ENCODE measurements at regions of chr6 and their contacts with region 1.

Region 1: GRCh38 chr6:119349323-119350042 is at the start of gene MAN1A1:
- DNase-seq: peak; percentile 92
- H3K4me3 Mint-ChIP-seq: peak within 1 kb of the TSS; percentile 79
- H3K27ac Mint-ChIP-seq: peak within 1 kb of the TSS; percentile 94
- H3K4me1 Mint-ChIP-seq: peaks cover 69% of the 10 kb centered on the region
- H3K27me3 Mint-ChIP-seq: no peaks in the 10 kb centered on the region
- total RNA-seq, gene MAN1A1: 50.1 and 52.4 TPM in 2 replicates

Region 2: GRCh38 chr6:118843685-118844390 is 505.6 kb before region 1 on chr6:
- intact Hi-C with region 1: loop called (anchors 1 kb)
- DNase-seq: peak; percentile 11
- H3K4me3 Mint-ChIP-seq: peak overlapping the region; percentile 34
- H3K27ac Mint-ChIP-seq: peak overlapping the region; percentile 19
- H3K4me1 Mint-ChIP-seq: peaks cover 27% of the 10 kb centered on the region
- H3K27me3 Mint-ChIP-seq: no peaks in the 10 kb centered on the region

Region 3: GRCh38 chr6:119129148-119129967 is 220.1 kb before region 1 on chr6:
- intact Hi-C with region 1: loop called (anchors 1 kb)
- DNase-seq: no peak
- H3K4me3 Mint-ChIP-seq: no peak overlapping the region
- H3K27ac Mint-ChIP-seq: peak overlapping the region; percentile 82
- H3K4me1 Mint-ChIP-seq: peaks cover 12% of the 10 kb centered on the region
- H3K27me3 Mint-ChIP-seq: peaks cover 9% of the 10 kb centered on the region

Region 4: DNA sequence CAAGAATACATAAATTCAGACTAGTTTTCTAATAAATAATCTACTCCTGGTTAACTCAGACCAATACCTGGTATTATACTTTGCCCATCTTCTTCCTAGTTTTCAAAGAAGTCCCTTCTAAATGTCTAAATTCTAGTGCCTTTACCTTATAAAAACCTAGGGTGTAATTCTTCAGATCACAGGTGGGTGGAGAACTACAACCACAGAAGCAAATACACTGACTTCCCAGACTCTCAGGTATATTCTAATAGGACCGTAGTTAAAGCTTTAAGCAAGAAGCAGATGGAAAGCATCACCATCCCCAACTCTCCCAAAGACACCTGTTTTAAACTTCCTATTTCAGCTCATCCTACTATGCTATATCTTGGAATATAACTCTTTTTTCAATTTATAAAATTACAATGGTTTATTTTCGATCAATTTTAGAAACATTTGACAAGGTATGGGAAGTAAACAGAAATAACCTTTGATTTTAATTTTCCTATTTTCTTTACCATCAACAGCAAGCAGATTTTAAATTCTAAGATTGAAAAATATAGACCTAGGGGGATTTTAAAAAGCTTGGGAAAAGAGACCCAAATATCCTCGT is 15.7 kb before region 1 on chr6:
- intact Hi-C with region 1: loop called (anchors 1 kb)
- DNase-seq: no peak
- H3K4me3 Mint-ChIP-seq: no peak overlapping the region
- H3K27ac Mint-ChIP-seq: no peak overlapping the region
- H3K4me1 Mint-ChIP-seq: peaks cover 69% of the 10 kb centered on the region
- H3K27me3 Mint-ChIP-seq: no peaks in the 10 kb centered on the region

Region 5: GRCh38 chr6:119620846-119621555 is 271.5 kb after region 1 on chr6:
- intact Hi-C with region 1: loop called (anchors 5 kb)
- DNase-seq: no peak
- H3K4me3 Mint-ChIP-seq: no peak overlapping the region
- H3K27ac Mint-ChIP-seq: no peak overlapping the region
- H3K4me1 Mint-ChIP-seq: no peaks in the 10 kb centered on the region
- H3K27me3 Mint-ChIP-seq: peaks cover 2% of the 10 kb centered on the region

Region 6: DNA sequence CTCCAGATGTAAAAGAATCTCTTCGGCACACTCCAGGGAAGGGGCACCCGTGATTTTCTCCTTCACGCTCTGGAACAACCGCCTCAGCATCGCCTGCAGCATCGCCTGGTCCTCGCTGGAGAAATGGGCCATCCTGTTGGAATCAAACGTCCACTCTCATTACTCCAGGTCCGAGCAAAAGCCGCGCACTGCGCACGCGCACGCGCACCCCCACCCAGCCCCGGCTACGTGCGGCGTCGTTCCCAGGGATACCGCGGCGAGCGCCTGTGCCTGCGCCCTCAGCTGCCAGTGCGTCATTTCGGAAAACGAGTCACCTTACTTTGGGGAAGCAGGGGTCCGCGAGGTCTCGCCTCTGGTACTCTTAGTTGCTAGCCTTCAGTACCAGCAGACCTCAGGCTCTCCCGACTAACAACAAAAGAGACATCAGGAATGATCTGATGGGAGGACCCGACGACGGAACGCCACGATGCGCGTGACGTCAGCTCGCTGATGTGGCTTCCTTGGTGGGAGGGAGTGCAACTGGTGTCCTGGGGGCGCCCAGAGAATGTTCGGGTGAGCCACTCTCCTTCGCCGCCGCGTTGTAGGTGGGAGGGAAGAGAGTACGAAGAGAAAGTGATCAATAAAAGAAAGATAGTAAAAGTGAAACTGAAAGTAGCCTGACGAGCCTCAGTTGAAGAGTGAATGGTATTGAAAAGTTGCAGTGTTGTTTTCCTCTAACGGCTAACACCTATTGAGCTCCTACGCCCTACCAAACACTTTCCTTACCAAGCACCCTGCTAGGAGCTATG is 1985.0 kb after region 1 on chr6 and contains the start of gene TBC1D32:
- intact Hi-C with region 1: loop called (anchors 2 kb)
- DNase-seq: peak; percentile 83
- H3K4me3 Mint-ChIP-seq: peak within 1 kb of the TSS; percentile 95
- H3K27ac Mint-ChIP-seq: peak within 1 kb of the TSS; percentile 99
- H3K4me1 Mint-ChIP-seq: peaks cover 31% of the 10 kb centered on the region
- H3K27me3 Mint-ChIP-seq: peaks cover 3% of the 10 kb centered on the region
- total RNA-seq, gene TBC1D32: 6.8 and 7.9 TPM in 2 replicates

Measured in activated T-helper 1 cell treated with anti-CD3 and anti-CD28 coated beads, Interleukin-12 subunit alpha, Interleukin-12 subunit beta, Interleukin-2, Interleukin-4 antibody, amounts not matched to agents 30 ng/mL and 10 ng/mL and 1 ng/mL, durations not matched to agents 14 hours and 24 hours and 36 hours (primary cell).